Sigmoid colon (tissue), 7 donors: ENCODE measurements at regions of chr15 and their contacts with region 1.

Region 1: DNA sequence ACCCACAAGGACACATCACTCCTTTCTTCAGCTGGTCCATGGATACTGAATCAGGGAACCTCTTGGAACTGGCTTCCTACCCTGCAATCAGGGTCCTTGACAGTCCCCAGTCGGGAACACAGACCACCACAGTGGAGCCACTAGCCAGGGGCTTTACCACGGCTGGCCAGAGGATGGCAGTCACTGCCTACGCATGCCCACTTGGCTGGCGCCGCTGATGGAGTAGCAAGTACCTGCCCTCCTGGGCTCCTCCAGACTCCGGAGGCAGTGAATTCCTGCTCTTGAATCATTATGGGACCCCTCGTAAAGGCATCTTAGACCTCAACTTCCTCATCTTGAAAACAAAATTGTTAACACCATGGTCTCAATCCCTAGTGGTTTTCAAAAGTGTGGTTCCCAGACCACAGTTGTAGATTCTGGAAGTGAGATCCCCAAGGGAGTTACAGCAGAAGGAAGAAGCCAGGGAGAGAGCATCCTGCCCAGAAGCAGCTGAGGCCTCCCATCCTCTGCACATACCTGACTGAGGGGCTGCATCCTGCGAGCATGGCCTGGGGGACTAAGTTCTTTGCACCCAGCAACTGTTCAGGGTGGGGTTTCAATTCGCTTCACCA is 9.1 kb upstream of the SKIC8 start:
- DNase-seq: peak; percentile 81
- H3K4me3 ChIP-seq: no peak overlapping the region
- H3K27ac ChIP-seq: no peak overlapping the region
- H3K4me1 ChIP-seq: no peaks in the 10 kb centered on the region
- H3K27me3 ChIP-seq: peaks cover 0 to 16% (median 0%) of the 10 kb centered on the region in 3 donors
- CTCF ChIP-seq: peak; percentile 75 to 80 (median 77)
- EP300 ChIP-seq: no peak
- POLR2A ChIP-seq: no peak

Region 2: GRCh38 chr15:77830051-77830477 is 478.5 kb before region 1 on chr15:
- intact Hi-C with region 1: no loop called
- DNase-seq: no peak
- H3K4me3 ChIP-seq: no peak overlapping the region
- H3K27ac ChIP-seq: no peak overlapping the region
- H3K4me1 ChIP-seq: no peaks in the 10 kb centered on the region
- H3K27me3 ChIP-seq: no peaks in the 10 kb centered on the region
- CTCF ChIP-seq: no peak
- EP300 ChIP-seq: no peak
- POLR2A ChIP-seq: no peak

Region 3: DNA sequence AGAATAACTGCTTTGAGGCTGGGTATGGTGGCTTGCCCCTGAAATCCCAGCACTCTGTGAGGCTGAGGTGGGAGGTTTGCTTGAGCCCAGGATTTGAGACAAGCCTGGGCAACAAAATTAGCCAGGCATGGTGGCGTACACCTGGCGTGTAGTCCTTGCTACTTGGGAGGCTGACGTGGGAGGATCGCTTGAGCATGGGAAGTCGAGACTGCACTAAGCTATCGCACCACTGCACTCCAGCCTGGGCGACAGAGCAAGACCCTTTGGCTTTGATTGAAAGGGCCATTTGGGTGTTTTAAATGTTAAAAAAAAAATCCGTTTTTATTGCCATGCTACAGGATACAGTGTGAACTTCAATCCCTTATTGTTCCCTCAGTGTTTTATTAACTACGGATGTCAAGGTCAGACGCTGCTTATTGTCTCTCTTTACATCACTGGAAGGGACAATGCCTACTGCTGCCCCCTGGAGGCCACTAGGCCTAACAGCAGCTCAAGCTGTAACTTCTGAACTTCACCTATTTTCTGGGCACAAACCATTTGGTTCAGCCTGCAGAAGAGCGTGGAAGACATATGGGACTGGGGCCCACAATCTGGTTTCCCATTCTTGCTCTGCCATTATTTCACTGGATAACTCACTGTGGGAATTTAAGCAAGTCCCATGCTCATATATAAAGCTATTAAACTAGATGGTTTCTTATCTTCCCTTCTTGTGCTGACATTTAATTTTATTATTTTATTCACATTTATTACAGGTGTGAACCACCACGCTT is 114.2 kb after region 1 on chr15:
- intact Hi-C with region 1: loop called (anchors 1 kb)
- DNase-seq: peak; percentile 81
- H3K4me3 ChIP-seq: no peak overlapping the region
- H3K27ac ChIP-seq: no peak overlapping the region
- H3K4me1 ChIP-seq: peaks cover 0 to 4% (median 0%) of the 10 kb centered on the region in 4 donors
- H3K27me3 ChIP-seq: no peaks in the 10 kb centered on the region
- CTCF ChIP-seq: peak; percentile 83 to 92 (median 90)
- EP300 ChIP-seq: no peak
- POLR2A ChIP-seq: no peak

Region 4: GRCh38 chr15:78481917-78482316 is 173.4 kb after region 1 on chr15:
- intact Hi-C with region 1: loop called (anchors 5 kb)
- DNase-seq: no peak
- H3K4me3 ChIP-seq: no peak overlapping the region
- H3K27ac ChIP-seq: no peak overlapping the region
- H3K4me1 ChIP-seq: no peaks in the 10 kb centered on the region
- H3K27me3 ChIP-seq: no peaks in the 10 kb centered on the region
- CTCF ChIP-seq: no peak
- EP300 ChIP-seq: no peak
- POLR2A ChIP-seq: no peak

Region 5: GRCh38 chr15:78565097-78565951 is 256.8 kb after region 1 on chr15 and contains the start of gene CHRNA5:
- intact Hi-C with region 1: no loop called
- DNase-seq: peak; percentile 97
- H3K4me3 ChIP-seq: peak within 1 kb of the TSS; percentile 42 to 61 (median 54)
- H3K27ac ChIP-seq: peak within 1 kb of the TSS; percentile 62 to 82 (median 80)
- H3K4me1 ChIP-seq: peaks cover 0 to 18% (median 10%) of the 10 kb centered on the region in 4 donors
- H3K27me3 ChIP-seq: no peaks in the 10 kb centered on the region
- CTCF ChIP-seq: no peak
- EP300 ChIP-seq: no peak
- POLR2A ChIP-seq: no peak
- total RNA-seq, gene CHRNA5: 1.2 to 3.0 (median 1.7) TPM